GM12878 (cell line): ENCODE measurements at regions of chr1 and their contacts with region 1.

Region 1: GRCh38 chr1:170800812-170801211 is 134.5 kb upstream of the MROH9 start:
- DNase-seq: no peak
- ATAC-seq: no peak
- H3K4me3 ChIP-seq: no peak overlapping the region
- H3K27ac ChIP-seq: no peak overlapping the region
- H3K4me1 ChIP-seq: no peaks in the 10 kb centered on the region
- H3K27me3 ChIP-seq: no peaks in the 10 kb centered on the region
- CTCF ChIP-seq: no peak
- EP300 ChIP-seq: no peak
- POLR2A ChIP-seq: no peak
- RAD21 ChIP-seq: no peak

Region 2: DNA sequence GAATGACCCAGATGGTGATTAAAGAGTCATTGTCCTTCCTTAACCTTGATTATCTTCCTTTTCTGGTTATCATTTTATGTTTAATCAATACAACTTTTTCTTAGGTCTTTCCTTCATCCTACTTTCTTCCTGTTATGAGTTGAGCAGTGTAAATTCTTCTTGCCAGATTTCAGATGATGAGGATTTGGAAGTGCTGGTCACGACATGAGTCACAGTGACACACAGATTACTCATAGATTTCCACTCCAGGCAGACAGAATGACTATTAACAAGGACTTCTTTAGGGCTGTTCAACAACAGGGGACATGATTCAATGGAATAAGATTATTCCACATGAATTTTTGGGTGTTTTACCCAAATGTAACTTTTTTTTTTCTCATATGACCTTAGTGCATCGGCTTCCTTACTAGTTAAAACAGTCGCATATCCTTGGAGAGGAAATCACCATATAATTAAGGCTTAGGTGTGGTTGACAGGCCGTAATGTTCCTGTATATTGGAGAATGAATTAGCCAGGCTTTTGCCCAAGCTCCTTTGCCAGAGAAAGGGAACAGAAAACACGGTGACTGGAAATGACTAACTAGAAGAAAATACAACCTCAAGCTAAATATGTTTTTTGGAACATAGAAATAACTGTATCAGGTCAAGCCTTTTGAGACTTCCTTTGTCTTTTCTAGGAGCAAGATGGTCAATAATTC is 92.7 kb before region 1 on chr1:
- CTCF ChIA-PET with region 1: no interaction called
- POLR2A ChIA-PET with region 1: no interaction called
- RAD21 ChIA-PET with region 1: no interaction called
- SMC1A ChIA-PET with region 1: no interaction called
- in situ Hi-C with region 1: no loop called
- intact Hi-C with region 1: no loop called
- DNase-seq: no peak
- ATAC-seq: no peak
- H3K4me3 ChIP-seq: no peak overlapping the region
- H3K27ac ChIP-seq: no peak overlapping the region
- H3K4me1 ChIP-seq: no peaks in the 10 kb centered on the region
- H3K27me3 ChIP-seq: no peaks in the 10 kb centered on the region
- CTCF ChIP-seq: no peak
- EP300 ChIP-seq: no peak
- POLR2A ChIP-seq: no peak
- RAD21 ChIP-seq: no peak

Region 3: DNA sequence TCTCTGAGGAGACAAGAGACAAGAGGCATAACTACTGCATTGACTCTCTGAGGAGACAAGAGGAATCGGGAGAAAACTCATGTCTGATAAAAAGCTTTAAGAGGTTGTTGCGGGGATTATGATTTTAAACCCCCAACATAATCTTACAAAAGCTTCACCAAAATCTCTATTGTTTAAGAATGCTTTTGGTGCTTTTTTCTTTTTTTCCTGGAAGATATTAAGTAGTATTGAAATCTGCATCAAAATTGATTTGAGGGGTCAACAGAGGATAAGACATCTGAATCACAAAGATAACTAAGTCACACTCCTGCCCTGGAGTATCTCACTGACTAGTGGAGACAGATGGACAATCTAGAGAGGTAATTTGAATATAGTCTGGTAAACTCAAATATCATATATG is 19.0 kb after region 1 on chr1:
- CTCF ChIA-PET with region 1: no interaction called
- POLR2A ChIA-PET with region 1: no interaction called
- RAD21 ChIA-PET with region 1: no interaction called
- SMC1A ChIA-PET with region 1: no interaction called
- in situ Hi-C with region 1: no loop called
- intact Hi-C with region 1: loop called (anchors 2 kb)
- DNase-seq: no peak
- ATAC-seq: no peak
- H3K4me3 ChIP-seq: no peak overlapping the region
- H3K27ac ChIP-seq: no peak overlapping the region
- H3K4me1 ChIP-seq: no peaks in the 10 kb centered on the region
- H3K27me3 ChIP-seq: no peaks in the 10 kb centered on the region
- CTCF ChIP-seq: no peak
- EP300 ChIP-seq: no peak
- POLR2A ChIP-seq: no peak
- RAD21 ChIP-seq: no peak